HEK293 (cell line): ENCODE measurements at regions of chr5 and their contacts with region 1.

Region 1: GRCh38 chr5:69042915-69043658 is 50.7 kb upstream of the SLC30A5 start:
- H3K4me3 ChIP-seq: peak overlapping the region; percentile 59
- H3K27ac ChIP-seq: no peak overlapping the region
- H3K4me1 ChIP-seq: no peaks in the 10 kb centered on the region
- CTCF ChIP-seq: peak; percentile 69

Region 2: GRCh38 chr5:68628082-68628814 is 414.8 kb before region 1 on chr5:
- CTCF ChIA-PET with region 1: no interaction called
- POLR2A ChIA-PET with region 1: no interaction called
- H3K4me3 ChIP-seq: no peak overlapping the region
- H3K27ac ChIP-seq: no peak overlapping the region
- H3K4me1 ChIP-seq: no peaks in the 10 kb centered on the region
- CTCF ChIP-seq: no peak

Region 3: GRCh38 chr5:69032009-69032408 is 11.1 kb before region 1 on chr5:
- CTCF ChIA-PET with region 1: interaction called, 11 read pairs
- POLR2A ChIA-PET with region 1: interaction called, 4 read pairs
- H3K4me3 ChIP-seq: no peak overlapping the region
- H3K27ac ChIP-seq: no peak overlapping the region
- H3K4me1 ChIP-seq: no peaks in the 10 kb centered on the region
- CTCF ChIP-seq: no peak

Region 4: GRCh38 chr5:69083412-69083811 is 40.3 kb after region 1 on chr5:
- CTCF ChIA-PET with region 1: interaction called, 20 read pairs
- POLR2A ChIA-PET with region 1: no interaction called
- H3K4me3 ChIP-seq: no peak overlapping the region
- H3K27ac ChIP-seq: no peak overlapping the region
- H3K4me1 ChIP-seq: no peaks in the 10 kb centered on the region
- CTCF ChIP-seq: peak; percentile 39; the same call in 1 of the 2 replicates